ENCODE measurements at regions of chrX and their contacts with region 1.

Region 1: DNA sequence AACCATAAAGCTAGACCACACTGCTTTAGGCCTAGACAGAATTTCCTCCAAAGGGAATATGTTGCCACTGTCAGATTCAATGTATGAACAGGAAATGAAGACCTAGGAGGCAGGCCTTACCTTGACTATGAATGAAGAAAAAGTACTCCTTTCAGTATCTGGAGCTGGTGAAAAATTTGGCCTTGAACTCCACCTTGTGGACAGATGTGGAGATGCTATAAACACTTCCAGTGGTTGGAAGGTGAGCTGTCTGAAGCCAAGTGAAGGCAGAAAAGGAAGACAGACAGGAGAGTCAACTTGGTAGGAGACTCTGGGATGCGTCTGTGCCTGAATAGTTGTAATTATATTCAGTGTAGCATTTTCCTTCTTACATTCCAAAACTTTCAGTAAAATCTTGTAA is 17.2 kb downstream of the SPIN3 start:
- DNase-seq: peak; percentile 40
- H3K4me3 Mint-ChIP-seq: no peak overlapping the region
- H3K27ac Mint-ChIP-seq: no peak overlapping the region
- H3K4me1 Mint-ChIP-seq: no peaks in the 10 kb centered on the region
- H3K27me3 Mint-ChIP-seq: no peaks in the 10 kb centered on the region

Region 2: DNA sequence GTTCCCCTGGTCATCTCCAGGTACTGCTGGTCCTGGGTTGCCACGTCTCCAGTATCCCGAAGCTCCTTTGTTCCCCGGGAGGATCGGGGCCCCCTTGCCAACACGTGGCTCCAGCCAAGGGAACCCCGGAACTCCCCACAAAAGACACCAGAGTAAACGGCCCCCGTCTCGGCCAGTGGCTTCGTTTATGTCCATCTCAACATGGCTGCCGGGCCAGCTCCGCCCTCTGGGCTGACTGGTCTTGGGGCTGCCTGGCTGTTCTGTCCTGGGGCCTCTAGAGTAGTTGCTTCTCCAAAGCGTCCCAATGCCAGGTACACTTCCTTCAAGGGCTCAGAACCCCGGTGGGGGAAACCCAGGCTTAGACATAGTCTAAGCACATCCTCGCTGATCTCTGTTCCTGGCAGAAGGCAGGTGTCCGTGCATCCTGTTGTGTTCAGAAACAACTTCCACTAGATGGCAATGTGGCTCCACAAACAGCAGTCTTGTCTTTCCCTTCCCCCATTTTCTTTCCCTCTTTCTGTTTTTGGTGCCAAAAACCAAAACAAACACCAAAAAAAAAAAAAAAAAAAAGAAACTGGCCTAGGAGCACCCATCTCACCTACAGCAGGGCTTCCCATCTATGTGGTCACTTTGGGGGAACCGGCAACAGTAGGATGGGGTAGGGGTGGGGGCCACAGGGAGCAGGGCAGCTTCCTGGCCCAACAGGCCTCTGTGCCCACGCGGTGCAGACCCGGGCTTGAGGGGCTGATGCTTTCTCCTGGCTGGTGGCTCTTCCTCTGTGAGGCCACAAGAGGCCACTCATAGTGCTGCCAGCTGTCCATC is 213.8 kb before region 1 on chrX:
- CTCF ChIA-PET with region 1: interaction called, 32 read pairs
- POLR2A ChIA-PET with region 1: no interaction called
- intact Hi-C with region 1: loop called (anchors 10 kb)
- DNase-seq: peak; percentile 75
- H3K4me3 Mint-ChIP-seq: peak overlapping the region; percentile 72
- H3K27ac Mint-ChIP-seq: peak overlapping the region; percentile 90
- H3K4me1 Mint-ChIP-seq: peaks cover 49% of the 10 kb centered on the region
- H3K27me3 Mint-ChIP-seq: no peaks in the 10 kb centered on the region

Region 3: GRCh38 chrX:56928546-56928945 is 49.6 kb before region 1 on chrX:
- CTCF ChIA-PET with region 1: no interaction called
- POLR2A ChIA-PET with region 1: no interaction called
- intact Hi-C with region 1: no loop called
- DNase-seq: no peak
- H3K4me3 Mint-ChIP-seq: no peak overlapping the region
- H3K27ac Mint-ChIP-seq: no peak overlapping the region
- H3K4me1 Mint-ChIP-seq: no peaks in the 10 kb centered on the region
- H3K27me3 Mint-ChIP-seq: no peaks in the 10 kb centered on the region